Heart right ventricle (tissue), 16 donors: ENCODE measurements at regions of chr3 and their contacts with region 1.

Region 1: DNA sequence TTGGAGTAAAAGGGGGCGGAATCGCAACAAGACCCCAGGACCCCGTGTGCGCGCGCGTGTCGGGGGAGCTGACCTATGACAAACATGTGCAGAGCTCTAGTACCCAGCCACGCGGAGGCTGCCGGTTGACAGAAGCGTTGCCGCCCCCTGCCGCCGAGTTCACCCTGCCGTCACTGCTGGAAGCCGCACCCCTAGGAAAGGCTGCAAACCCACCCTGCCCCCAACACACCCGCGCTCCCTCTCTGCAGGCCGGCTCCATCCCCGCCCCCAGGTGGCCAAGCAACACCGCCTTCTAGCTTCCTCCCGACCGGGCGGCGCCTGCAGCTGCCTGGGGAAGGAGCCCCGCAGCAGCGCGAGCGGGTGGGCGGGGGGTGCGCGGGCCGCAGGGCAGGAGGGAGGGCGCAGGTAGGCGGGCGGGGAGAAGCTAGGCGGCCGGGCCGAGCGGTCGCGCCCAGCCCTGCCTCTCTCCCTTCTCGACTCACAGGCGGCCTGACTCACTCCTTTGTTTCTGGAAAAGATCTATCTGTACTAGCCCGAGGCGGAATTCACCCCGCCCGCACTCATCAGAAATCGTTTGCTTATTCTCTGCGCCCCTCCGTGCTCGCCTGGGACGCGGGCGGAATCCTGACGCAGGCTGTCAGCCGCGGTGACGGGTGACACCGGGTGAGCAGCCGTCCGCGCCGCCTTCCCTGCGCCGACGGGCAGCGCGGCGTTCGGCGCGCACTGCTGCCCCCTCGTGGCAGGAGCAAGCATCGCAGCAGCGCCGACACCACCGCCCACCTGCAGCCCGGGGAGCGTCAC is 160.8 kb downstream of the GAP43 start:
- DNase-seq: peak; percentile 90 to 93
- ATAC-seq: peak; percentile 95 to 98 (median 96)
- H3K4me3 ChIP-seq: peak overlapping the region; percentile 32 to 86 (median 70)
- H3K27ac ChIP-seq: peak overlapping the region; percentile 74 to 97 (median 95)
- H3K4me1 ChIP-seq: peaks cover 0 to 18% (median 8%) of the 10 kb centered on the region in 9 donors
- H3K27me3 ChIP-seq: peaks cover 0 to 10% (median 0%) of the 10 kb centered on the region in 7 donors
- CTCF ChIP-seq: peak; percentile 94 to 99 (median 97)

Region 2: DNA sequence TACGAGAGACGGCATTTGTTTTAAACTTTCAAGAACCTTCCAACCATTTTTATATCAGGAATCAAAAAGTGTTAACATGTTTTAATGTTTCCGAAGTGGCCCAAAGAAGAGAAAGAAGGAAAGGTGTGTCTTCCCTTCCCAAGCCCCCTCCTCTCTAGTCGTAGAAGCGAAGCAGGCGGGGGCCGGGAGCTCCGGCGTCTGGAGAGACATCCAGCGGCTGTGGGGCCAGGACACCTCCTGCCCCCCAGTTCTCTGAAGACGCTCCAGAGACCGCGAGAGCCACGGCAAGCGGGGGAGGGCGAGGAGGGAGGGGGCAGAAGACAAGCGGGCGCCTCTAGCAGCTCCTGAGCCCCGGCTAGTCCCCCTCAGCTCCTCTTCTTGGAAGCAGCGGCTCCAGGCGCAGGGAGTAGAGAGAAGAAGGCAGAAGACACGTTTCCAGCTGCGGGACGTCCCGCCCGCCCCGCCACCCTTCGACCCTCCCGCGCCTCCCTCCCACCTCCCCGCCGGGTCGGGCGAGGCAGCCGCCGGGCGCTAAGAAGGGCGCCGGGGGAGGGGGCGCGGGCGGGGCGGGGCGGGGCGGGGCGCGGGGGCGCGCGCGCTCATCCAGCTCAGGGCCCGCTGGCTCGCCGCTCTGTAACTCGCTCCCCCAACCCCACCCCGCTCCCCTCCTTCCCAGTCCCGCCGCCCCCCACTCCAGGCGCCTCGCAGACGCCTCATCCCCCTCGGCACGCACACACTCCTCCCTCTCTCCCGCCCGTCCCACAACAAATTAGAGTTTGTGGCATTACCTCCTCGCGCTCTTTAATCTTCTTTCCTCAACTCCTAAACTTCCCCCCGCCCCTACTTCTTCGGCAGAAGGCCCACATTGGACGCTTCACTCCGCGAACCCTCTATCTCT is 637.5 kb before region 1 on chr3 and contains the start of gene ZBTB20:
- intact Hi-C with region 1: no loop called
- DNase-seq: peak; percentile 58 to 69
- ATAC-seq: peak; percentile 27 to 52 (median 33)
- H3K4me3 ChIP-seq: peak within 1 kb of the TSS; percentile 80 to 94 (median 86)
- H3K27ac ChIP-seq: peak within 1 kb of the TSS; percentile 94 to 99 (median 97)
- H3K4me1 ChIP-seq: peaks cover 0 to 32% (median 20%) of the 10 kb centered on the region in 9 donors
- H3K27me3 ChIP-seq: no peaks in the 10 kb centered on the region
- CTCF ChIP-seq: no peak
- total RNA-seq, gene ZBTB20: 44.1 to 105 (median 94.8) TPM

Region 3: DNA sequence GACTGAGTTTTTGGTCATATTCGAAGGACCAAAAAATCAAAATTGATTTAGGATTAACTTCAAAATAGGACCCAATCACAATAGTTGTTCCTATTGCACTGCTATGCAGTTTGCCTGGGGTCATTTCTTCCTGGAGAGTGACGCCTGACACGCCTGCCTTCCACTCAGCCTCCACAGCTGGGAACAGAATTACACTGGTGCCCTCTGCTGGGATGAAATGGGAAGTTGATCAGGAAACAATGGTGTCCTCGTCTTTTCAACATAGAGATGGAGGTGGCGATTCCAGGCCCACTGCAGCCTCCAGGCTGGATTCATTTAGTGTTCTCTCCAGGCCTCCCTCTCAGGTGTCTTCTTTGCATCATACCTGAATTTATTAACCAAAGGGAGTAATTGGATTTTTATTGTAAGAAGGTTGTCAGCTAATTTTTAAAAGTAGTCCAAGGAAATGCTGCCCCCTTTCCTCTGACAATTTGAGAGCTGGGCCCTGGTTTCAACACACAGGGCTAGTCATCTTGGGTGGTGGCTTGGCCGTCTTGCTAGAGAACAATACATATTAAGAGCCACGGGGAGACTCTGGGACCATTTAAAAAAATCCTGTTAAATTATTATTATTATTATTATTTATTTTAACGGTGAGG is 91.1 kb before region 1 on chr3:
- intact Hi-C with region 1: loop called in 5 of 10 experiments (anchors 1 to 10 kb)
- DNase-seq: peak; percentile 39 to 80
- ATAC-seq: peak; percentile 87 to 98 (median 95)
- H3K4me3 ChIP-seq: no peak overlapping the region
- H3K27ac ChIP-seq: peak overlapping the region in 1 of 10 donors; percentile 59
- H3K4me1 ChIP-seq: peaks cover 0 to 10% (median 0%) of the 10 kb centered on the region in 9 donors
- H3K27me3 ChIP-seq: no peaks in the 10 kb centered on the region
- CTCF ChIP-seq: peak; percentile 65 to 90 (median 82)

Region 4: DNA sequence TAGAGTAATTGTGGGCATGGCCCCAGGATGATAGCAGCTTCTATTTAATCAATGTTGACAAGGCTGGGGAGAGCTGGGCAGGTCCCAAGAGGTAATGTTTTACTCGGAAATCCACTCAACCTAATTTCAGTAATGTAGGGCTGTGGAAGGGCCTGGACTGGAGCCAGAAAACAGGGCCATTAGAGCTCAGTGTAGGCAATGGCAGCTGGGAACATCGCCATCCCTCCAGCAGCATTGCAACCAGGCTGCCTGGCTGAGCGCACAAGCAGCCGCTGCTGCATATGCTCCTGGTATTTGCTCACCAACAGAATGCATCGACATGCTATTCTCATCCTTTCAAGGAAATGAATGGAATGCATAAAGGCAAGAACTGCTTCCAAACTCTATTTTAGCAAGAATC is 70.9 kb before region 1 on chr3:
- intact Hi-C with region 1: loop called in 1 of 10 experiments (anchors 5 kb)
- DNase-seq: peak in 1 of 2 donors; percentile 21
- ATAC-seq: no peak
- H3K4me3 ChIP-seq: no peak overlapping the region
- H3K27ac ChIP-seq: no peak overlapping the region
- H3K4me1 ChIP-seq: no peaks in the 10 kb centered on the region
- H3K27me3 ChIP-seq: peaks cover 0 to 2% (median 0%) of the 10 kb centered on the region in 7 donors
- CTCF ChIP-seq: no peak